ENCODE measurements at regions of chr20 and their contacts with region 1.

Region 1: GRCh38 chr20:49166534-49167449 is 21.3 kb downstream of the STAU1 start:
- DNase-seq: no peak
- ATAC-seq: peak; percentile 80
- H3K4me3 Mint-ChIP-seq: peak overlapping the region; percentile 8
- H3K27ac Mint-ChIP-seq: peak overlapping the region; percentile 86
- H3K4me1 Mint-ChIP-seq: peaks cover 66% of the 10 kb centered on the region
- H3K27me3 Mint-ChIP-seq: no peaks in the 10 kb centered on the region
- CTCF ChIP-seq: no peak

Region 2: DNA sequence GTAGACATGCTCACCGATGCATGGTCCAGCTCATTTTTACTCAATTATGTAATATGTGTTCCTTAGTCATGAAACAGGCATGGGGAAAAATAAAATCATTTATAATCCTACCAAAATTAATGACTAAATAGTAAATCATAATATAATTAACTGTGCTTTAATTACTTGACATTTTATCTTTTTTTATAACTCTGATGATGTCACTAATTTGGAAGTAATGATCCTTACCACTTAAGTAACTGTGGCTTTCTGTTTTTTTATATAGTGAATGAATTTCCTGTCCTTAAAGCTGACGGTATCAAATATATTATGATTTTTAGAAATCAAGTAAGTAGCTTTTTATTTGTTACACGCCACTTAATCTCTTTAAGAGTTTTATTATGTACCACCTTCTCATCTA is 88.5 kb before region 1 on chr20:
- CTCF ChIA-PET with region 1: no interaction called
- POLR2A ChIA-PET with region 1: no interaction called
- intact Hi-C with region 1: no loop called
- DNase-seq: no peak
- ATAC-seq: no peak
- H3K4me3 Mint-ChIP-seq: no peak overlapping the region
- H3K27ac Mint-ChIP-seq: no peak overlapping the region
- H3K4me1 Mint-ChIP-seq: peaks cover 7% of the 10 kb centered on the region
- H3K27me3 Mint-ChIP-seq: no peaks in the 10 kb centered on the region
- CTCF ChIP-seq: no peak

Region 3: GRCh38 chr20:49179368-49180277 is 12.8 kb after region 1 on chr20:
- CTCF ChIA-PET with region 1: interaction called, 32 read pairs
- POLR2A ChIA-PET with region 1: interaction called, 11 read pairs
- intact Hi-C with region 1: no loop called
- DNase-seq: no peak
- ATAC-seq: no peak
- H3K4me3 Mint-ChIP-seq: no peak overlapping the region
- H3K27ac Mint-ChIP-seq: peak overlapping the region; percentile 43
- H3K4me1 Mint-ChIP-seq: peaks cover 53% of the 10 kb centered on the region
- H3K27me3 Mint-ChIP-seq: no peaks in the 10 kb centered on the region
- CTCF ChIP-seq: no peak

Region 4: DNA sequence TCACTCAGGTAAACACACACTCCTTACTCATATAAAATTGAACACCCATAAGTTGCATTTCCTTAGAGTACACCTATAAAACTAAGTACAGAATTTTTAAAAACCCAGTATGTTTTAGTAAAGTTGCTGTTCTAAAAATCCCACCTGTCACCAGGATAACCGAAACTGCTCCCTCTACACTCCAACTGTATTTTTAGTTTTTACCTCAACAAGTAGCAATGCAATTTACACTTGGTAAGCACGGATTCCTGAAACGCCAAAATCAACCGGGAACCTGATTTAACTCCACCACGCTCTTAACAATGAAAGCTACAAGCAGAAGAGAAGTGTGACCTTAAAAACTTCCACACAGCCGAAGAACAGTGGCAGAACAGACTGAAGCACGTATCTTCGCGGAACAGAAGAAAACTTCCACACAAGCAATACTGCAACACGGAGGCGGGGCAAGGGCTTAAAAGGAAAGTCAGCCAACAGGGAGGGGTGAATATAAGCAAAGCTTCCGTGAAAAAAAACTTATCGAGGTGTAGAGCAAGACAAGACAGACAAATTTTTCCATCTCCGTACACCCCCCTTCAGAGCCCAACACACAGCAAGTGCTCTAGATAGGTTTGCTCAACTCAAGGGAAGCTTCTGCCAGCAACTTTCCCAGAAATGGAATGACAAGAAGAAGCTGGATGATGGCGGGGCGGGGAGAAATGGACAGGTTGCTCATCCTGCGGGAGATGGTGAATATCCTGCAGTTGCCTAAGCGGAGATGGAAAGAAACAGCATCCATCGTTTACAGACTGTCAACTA is 19.9 kb after region 1 on chr20:
- CTCF ChIA-PET with region 1: interaction called, 32 read pairs
- POLR2A ChIA-PET with region 1: interaction called, 13 read pairs
- intact Hi-C with region 1: no loop called
- DNase-seq: peak; percentile 87
- ATAC-seq: peak; percentile 52
- H3K4me3 Mint-ChIP-seq: peak overlapping the region; percentile 89
- H3K27ac Mint-ChIP-seq: peak overlapping the region; percentile 95
- H3K4me1 Mint-ChIP-seq: peaks cover 45% of the 10 kb centered on the region
- H3K27me3 Mint-ChIP-seq: no peaks in the 10 kb centered on the region
- CTCF ChIP-seq: no peak